Naive thymus-derived CD8-positive, alpha-beta T cell (primary cell): ENCODE measurements at regions of chr22 and their contacts with region 1.

Region 1: DNA sequence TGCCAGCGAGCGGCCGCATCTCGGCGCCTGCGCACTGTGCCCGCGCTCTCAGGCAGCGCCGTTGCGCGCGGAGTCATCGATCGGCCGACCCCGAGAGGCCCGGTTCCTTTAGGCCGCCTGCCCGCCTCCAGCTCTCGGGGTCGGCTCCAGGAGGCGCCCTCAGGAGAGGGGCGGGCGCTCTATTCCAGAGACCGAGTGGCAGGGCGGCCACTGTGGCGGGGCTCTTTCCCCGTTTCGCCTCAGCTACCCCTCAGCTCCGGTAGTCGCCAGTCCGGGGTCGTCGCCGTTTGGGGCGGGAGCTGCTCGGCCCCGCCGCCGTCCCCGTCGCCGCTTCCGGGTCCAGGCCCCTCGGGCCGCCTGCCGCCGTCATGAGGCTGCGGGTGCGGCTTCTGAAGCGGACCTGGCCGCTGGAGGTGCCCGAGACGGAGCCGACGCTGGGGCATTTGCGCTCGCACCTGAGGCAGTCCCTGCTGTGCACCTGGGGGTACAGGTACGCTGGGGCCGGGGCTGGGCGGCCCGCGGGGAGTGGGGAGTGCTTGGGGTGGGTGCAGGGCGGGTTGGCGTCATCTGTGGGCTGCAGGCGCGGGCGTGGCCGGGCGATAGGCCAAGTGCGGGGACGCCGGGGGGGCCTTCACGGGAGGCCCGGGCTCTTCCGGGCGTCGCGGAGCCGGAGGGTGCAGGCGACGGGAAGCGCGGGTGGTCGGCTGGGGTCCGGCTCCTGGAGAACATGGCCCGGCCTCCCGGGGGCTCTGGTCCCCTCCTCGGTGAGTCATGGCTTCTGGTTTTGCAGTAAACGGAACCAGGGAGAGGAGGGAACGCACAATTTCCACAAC is at the start of gene FBXO7:
- DNase-seq: peak; percentile 76 to 91 (median 87)
- ATAC-seq: peak; percentile 81 to 87
- H3K4me3 Mint-ChIP-seq: peak within 1 kb of the TSS in 9 of 10 donors; percentile 92 to 98 (median 97)
- H3K27ac Mint-ChIP-seq: peak within 1 kb of the TSS; percentile 81 to 98 (median 96)
- H3K4me1 Mint-ChIP-seq: peaks cover 14 to 30% (median 25%) of the 10 kb centered on the region in 4 donors
- H3K27me3 Mint-ChIP-seq: no peaks in the 10 kb centered on the region
- polyA plus RNA-seq, gene FBXO7: 126 to 149 (median 146) TPM

Region 2: GRCh38 chr22:32411829-32412592 is 62.8 kb before region 1 on chr22 and contains the start of gene RTCB:
- POLR2A ChIA-PET with region 1: interaction called, 20 read pairs
- DNase-seq: peak; percentile 86 to 96 (median 92)
- ATAC-seq: peak; percentile 90 to 94
- H3K4me3 Mint-ChIP-seq: peak within 1 kb of the TSS; percentile 94 to 99 (median 98)
- H3K27ac Mint-ChIP-seq: peak within 1 kb of the TSS; percentile 93 to 98 (median 97)
- H3K4me1 Mint-ChIP-seq: peaks cover 17 to 56% (median 51%) of the 10 kb centered on the region in 4 donors
- H3K27me3 Mint-ChIP-seq: peaks cover 0 to 9% (median 0%) of the 10 kb centered on the region in 5 donors
- polyA plus RNA-seq, gene RTCB: 103 to 109 (median 106) TPM

Region 3: DNA sequence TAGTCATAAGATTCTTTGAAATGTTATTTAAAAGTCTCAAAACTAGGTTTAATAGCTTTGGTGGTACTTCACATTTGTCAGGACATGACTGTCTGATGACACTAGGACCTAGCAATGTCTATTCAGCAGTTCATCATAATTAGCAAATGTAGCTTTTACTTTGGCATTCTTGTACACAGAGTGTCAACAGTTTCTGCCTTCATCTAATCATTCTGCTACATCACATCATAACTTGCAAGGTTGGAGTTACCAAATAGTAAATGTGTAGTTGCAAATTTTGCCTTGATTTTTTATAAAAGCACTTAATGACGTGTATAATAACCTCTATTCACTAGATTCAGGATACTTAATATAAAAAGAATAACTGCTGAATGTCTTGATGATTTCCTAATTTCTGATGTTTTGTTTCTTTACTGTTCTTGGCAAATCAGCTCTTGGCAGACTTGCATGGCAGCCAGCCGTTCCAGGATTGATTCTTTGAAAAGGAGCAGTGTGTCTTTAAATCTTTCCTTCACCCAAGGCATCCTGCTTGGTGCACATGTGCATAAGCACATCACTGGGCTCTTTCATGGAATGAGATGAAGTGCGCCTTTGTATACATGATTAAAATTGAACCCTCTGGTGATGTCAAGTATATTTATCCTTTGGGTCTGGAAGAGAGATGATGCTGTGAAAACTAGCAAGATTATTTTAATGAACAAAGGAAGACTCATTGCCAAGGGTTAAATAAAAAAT is 12.0 kb after region 1 on chr22:
- POLR2A ChIA-PET with region 1: interaction called, 11 read pairs
- DNase-seq: no peak
- ATAC-seq: no peak
- H3K4me3 Mint-ChIP-seq: no peak overlapping the region
- H3K27ac Mint-ChIP-seq: peak overlapping the region in 2 of 10 donors; percentile 40 to 53
- H3K4me1 Mint-ChIP-seq: peaks cover 4 to 16% (median 6%) of the 10 kb centered on the region in 4 donors
- H3K27me3 Mint-ChIP-seq: no peaks in the 10 kb centered on the region